Psoas muscle (tissue), 8 donors: ENCODE measurements at regions of chr5 and their contacts with region 1.

Region 1: GRCh38 chr5:142713121-142713706 is 27.3 kb upstream of the FGF1 start:
- DNase-seq: peak; percentile 85 to 92
- ATAC-seq: peak; percentile 94 to 98 (median 97)
- H3K4me3 ChIP-seq: peak overlapping the region; percentile 69
- H3K27ac ChIP-seq: peak overlapping the region; percentile 80
- H3K4me1 ChIP-seq: no peaks in the 10 kb centered on the region
- H3K27me3 ChIP-seq: no peaks in the 10 kb centered on the region
- CTCF ChIP-seq: peak; percentile 94

Region 2: DNA sequence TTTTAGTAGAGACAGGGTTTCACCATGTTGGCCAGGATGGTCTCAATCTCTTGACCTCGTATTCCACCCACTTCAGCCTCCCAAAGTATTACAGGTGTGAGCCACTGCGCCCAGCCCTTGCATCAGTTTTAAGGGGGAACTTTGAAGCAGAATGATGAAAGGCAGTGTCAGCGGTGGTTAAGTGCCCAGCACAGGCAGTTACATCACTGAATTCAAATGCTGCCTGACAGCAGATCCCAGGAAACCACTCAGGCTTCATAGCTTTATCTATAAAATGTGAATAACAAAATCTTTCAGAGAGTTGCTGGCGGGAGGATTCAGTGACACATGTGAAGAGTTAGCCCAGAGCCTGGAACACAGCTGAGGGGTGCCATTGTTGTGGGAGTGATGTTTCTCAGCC is 53.8 kb before region 1 on chr5:
- intact Hi-C with region 1: no loop called
- DNase-seq: no peak
- ATAC-seq: no peak
- H3K4me3 ChIP-seq: no peak overlapping the region
- H3K27ac ChIP-seq: no peak overlapping the region
- H3K4me1 ChIP-seq: peaks cover 7% of the 10 kb centered on the region
- H3K27me3 ChIP-seq: no peaks in the 10 kb centered on the region
- CTCF ChIP-seq: no peak

Region 3: GRCh38 chr5:142888469-142889085 is 175.4 kb after region 1 on chr5:
- intact Hi-C with region 1: loop called (anchors 2 to 5 kb)
- DNase-seq: no peak
- ATAC-seq: peak; percentile 72 to 87 (median 78)
- H3K4me3 ChIP-seq: no peak overlapping the region
- H3K27ac ChIP-seq: no peak overlapping the region
- H3K4me1 ChIP-seq: no peaks in the 10 kb centered on the region
- H3K27me3 ChIP-seq: no peaks in the 10 kb centered on the region
- CTCF ChIP-seq: peak; percentile 85